Sciatic nerve (tissue), 2 donors: ENCODE measurements at regions of chr3 and their contacts with region 1.

Region 1: DNA sequence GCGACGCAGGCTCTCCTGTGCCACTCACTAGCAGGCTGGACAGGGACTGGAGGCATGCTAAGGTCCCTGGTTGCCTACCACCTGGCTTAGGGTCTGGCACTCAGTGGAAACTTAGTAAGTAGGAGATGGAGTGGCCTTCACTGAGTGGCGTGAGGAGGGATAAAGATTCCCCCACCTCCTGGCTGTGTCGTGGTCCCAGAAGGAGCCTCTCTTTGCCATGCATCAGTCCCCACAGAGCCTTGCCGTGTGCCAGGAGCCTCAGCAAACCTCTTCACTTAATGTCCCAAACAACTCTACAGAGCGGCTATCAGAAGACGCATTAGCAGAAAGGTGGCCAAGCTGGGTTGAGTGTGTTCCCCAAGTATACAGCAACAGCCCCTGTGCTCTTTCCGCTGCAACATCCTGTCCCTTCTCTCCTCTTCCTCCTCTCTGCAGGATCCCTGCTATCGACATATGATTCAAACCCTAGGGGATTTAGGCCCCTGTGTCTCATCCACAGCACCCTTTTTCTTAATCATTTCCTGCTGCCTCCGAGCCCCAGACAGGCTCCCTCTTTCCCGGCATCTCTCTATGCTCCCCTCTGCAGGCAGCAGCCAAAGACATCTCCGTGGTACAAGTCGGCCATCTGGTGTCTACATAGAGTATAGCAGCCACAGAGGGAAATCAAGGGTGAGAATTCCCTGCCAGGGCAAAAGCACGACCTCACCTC is 66.7 kb downstream of the SLC6A1 start:
- DNase-seq: no peak
- ATAC-seq: peak; percentile 92

Region 2: DNA sequence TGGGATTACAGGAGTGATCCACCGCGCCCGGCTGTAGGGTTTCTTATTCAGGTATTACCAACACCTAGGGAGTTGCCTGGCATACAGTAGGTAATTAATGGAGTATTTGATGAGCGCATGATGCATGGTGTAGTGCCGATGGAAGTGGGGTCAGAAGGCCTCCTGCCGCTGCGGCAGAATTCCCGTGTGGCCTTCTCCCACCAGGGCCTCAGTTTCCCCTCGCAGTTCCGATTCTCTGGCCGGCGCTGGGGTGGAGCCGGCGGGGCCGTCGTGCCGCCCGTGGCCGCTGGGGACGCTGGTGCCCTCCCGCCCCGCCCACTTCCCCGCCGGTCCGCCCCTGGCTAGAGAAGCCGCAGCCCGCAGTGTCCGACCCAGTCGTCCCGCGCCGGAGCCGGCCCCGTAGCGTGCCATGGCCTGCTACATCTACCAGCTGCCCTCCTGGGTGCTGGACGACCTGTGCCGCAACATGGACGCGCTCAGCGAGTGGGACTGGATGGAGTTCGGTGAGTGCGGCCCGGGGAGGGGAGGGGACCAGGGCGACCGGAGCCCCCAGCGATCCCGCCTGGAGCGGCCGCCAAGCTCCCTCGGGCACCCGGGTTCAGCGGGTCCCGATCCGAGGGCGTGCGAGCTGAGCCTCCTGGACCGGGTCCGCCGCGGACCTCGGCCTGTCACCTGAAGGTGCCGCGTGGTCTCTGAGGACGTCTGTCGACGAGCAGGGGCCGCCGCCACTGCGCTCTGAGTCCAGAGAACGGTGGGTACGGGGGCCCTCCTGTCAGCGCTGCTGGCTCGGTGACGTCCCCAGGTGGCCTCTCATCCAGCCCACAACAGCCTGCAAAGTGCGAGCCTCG is 894.5 kb before region 1 on chr3 and contains the start of gene IRAK2:
- intact Hi-C with region 1: no loop called
- DNase-seq: peak; percentile 86
- ATAC-seq: peak; percentile 89
- total RNA-seq, gene IRAK2: 6.4 TPM

Region 3: GRCh38 chr3:10764259-10765051 is 294.8 kb before region 1 on chr3:
- intact Hi-C with region 1: loop called (anchors 10 kb)
- DNase-seq: no peak
- ATAC-seq: no peak

Region 4: DNA sequence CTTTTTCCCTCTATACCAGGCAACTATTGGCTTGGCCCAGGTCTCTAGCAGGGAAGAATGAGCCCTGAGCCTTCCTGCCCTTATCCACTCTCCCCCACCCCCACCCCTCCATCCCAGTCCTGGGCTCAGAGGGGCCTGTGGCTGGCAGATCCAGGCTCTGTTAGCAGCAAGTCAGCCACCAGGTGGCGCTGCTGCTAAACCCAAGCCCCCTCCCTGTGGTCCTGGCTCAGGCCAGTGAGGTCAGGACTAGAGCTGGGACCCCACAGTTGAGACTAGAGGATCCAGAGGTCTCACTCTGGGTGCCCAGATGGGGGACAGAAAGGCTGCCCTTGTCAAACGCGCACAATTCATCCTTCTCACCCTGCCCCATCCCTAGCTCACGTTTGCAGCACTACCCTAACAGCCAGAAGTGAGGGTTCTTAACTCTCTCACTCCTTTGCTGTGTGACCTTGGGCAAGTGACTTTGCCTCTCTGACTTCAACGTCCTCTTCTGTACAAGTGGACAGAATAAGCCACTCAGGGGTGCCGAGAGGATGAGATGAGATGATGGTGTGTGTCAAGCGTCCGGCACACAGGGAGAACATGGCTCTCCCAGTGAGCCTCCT is 113.5 kb before region 1 on chr3:
- intact Hi-C with region 1: loop called (anchors 10 kb)
- DNase-seq: peak; percentile 78
- ATAC-seq: peak; percentile 73